ENCODE measurements at regions of chr4 and their contacts with region 1.

Region 1: DNA sequence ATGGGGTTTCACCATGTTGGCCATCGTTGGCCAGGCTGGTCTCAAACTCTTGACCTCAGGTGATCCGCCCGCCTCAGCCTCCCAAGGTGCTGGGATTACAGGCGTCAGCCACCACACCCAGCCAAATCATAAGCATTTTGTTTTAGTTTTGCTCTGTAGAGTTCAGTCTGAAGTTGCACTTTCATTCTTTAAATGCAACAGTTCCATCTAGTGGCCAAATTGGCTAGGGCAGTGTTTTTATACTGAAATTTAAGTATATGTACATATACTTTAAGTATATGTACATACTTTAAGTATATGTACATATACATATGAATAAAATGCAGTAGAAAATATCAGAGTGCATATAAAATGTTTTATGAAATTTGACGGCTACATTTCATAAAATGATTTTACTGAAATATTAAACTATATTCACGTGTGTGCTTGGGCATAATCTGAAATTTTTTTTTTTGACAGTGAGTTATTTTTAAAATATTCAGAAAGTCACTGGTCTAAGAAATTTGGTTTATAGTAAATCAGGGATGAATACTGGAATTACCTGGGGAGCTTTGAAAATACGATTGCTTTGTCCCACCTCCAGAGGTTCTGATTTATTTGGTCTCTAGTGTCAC is 145.5 kb downstream of the NWD2 start:
- DNase-seq: peak; percentile 29
- H3K4me3 ChIP-seq: no peak overlapping the region
- H3K27ac ChIP-seq: no peak overlapping the region
- H3K4me1 ChIP-seq: no peaks in the 10 kb centered on the region
- H3K27me3 ChIP-seq: no peaks in the 10 kb centered on the region
- CTCF ChIP-seq: peak; percentile 71 to 74

Region 2: GRCh38 chr4:36351082-36351666 is 1038.9 kb before region 1 on chr4:
- CTCF ChIA-PET with region 1: no interaction called
- dilution Hi-C with region 1: no loop called
- in situ Hi-C with region 1: no loop called
- intact Hi-C with region 1: loop called (anchors 1 kb)
- DNase-seq: peak; percentile 34
- H3K4me3 ChIP-seq: no peak overlapping the region
- H3K27ac ChIP-seq: no peak overlapping the region
- H3K4me1 ChIP-seq: no peaks in the 10 kb centered on the region
- H3K27me3 ChIP-seq: no peaks in the 10 kb centered on the region
- CTCF ChIP-seq: peak; percentile 77 to 80

Region 3: DNA sequence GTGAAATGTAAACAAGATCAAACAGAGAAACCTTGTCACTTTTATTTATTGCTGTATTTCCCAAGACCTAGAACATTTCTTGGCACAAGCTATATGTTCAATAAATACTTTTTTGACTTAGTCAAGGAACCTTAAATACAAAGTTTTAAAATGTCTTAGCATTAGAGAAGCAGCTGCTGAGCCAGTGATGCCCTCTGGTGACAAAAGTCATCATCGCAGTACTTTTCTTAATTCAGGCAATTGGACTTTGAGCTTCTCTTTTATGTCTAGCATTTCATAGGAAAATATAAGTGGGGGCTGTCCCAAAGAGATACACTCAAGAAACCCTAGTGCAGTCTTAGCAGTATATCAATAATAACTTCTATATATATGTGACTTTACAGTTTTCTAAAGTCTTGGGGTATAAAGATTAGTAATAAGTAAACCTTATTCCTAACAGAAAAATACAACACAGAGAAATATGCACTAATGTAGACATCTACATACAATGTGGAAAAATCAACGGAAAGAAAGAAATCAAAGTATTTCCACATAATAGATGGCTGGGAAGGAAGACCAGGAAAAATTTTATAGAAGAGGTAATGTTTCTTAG is 990.2 kb before region 1 on chr4:
- CTCF ChIA-PET with region 1: no interaction called
- dilution Hi-C with region 1: no loop called
- in situ Hi-C with region 1: loop called in 1 of 2 experiments (anchors 25 kb)
- intact Hi-C with region 1: no loop called
- DNase-seq: no peak
- H3K4me3 ChIP-seq: no peak overlapping the region
- H3K27ac ChIP-seq: no peak overlapping the region
- H3K4me1 ChIP-seq: no peaks in the 10 kb centered on the region
- H3K27me3 ChIP-seq: no peaks in the 10 kb centered on the region
- CTCF ChIP-seq: peak; percentile 69 to 77

Region 4: GRCh38 chr4:36601864-36602495 is 788.1 kb before region 1 on chr4:
- CTCF ChIA-PET with region 1: no interaction called
- dilution Hi-C with region 1: no loop called
- in situ Hi-C with region 1: no loop called
- intact Hi-C with region 1: no loop called
- DNase-seq: no peak
- H3K4me3 ChIP-seq: no peak overlapping the region
- H3K27ac ChIP-seq: no peak overlapping the region
- H3K4me1 ChIP-seq: no peaks in the 10 kb centered on the region
- H3K27me3 ChIP-seq: no peaks in the 10 kb centered on the region
- CTCF ChIP-seq: no peak

Region 5: GRCh38 chr4:37699868-37700481 is 309.9 kb after region 1 on chr4:
- CTCF ChIA-PET with region 1: interaction called, 11 read pairs
- dilution Hi-C with region 1: no loop called
- in situ Hi-C with region 1: no loop called
- intact Hi-C with region 1: no loop called
- DNase-seq: no peak
- H3K4me3 ChIP-seq: no peak overlapping the region
- H3K27ac ChIP-seq: no peak overlapping the region
- H3K4me1 ChIP-seq: no peaks in the 10 kb centered on the region
- H3K27me3 ChIP-seq: no peaks in the 10 kb centered on the region
- CTCF ChIP-seq: no peak

Measured in mammary epithelial cell (primary cell).